ENCODE measurements at regions of chr15 and their contacts with region 1.

Region 1: DNA sequence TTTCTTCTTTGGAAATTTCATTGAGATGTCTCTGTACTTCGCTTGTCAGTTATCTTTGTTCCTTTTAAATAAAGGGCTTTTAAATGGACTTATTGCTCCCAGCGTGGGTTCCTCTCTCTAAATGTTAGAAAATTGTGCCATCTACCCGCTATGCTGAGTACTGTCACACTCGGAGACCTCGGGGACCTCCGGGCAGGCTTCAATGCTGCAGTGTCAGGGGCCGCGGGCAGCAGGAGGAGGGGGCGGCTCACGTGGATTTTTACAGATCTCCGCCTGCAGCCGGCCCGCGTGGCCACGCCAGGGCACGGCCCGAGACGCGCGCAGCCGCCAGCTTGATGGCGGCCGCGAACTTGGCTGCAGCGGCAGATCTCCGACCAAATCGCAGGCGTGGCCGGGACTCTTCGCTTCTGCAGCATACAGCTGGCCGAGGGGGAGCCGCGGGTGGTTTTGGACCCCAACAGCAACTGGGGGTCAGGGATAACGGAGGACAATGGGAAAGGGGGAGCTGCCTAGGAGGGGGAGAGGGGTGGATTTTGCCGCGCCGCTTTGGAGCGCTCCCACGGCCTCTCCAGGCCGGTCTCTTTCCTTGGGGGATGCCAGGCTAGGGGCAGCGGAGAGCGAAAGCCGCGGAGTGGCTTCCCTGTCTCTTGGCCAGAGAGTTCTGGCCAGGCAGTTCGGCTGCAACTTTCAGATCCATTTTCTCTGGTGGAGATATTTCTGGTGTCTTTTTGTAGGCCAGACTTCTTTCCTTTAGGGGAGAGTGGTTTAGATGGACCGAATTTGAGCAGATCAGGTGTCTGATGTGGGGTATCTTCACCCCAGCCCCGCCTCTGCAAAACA is 15.3 kb downstream of the NR2F2 start:
- DNase-seq: peak; percentile 88 to 95 (median 94)
- ATAC-seq: peak; percentile 79 to 85
- H3K4me3 ChIP-seq: peak overlapping the region; percentile 44
- H3K27ac ChIP-seq: peak overlapping the region; percentile 89
- H3K4me1 ChIP-seq: peaks cover 10% of the 10 kb centered on the region
- H3K27me3 ChIP-seq: no peaks in the 10 kb centered on the region

Region 2: GRCh38 chr15:95284933-95285421 is 1060.8 kb before region 1 on chr15:
- intact Hi-C with region 1: loop called in 1 of 4 experiments (anchors 10 kb)
- DNase-seq: no peak
- ATAC-seq: peak; percentile 40 to 68
- H3K4me3 ChIP-seq: no peak overlapping the region
- H3K27ac ChIP-seq: no peak overlapping the region
- H3K4me1 ChIP-seq: no peaks in the 10 kb centered on the region
- H3K27me3 ChIP-seq: no peaks in the 10 kb centered on the region